Activated T-helper 2 cell treated with anti-CD3 and anti-CD28 coated beads, Interferon-gamma antibody, Interleukin-2, Interleukin-4, amounts not matched to agents 10 μg/mL and 5 μg/mL and 100 μg/mL, durations not matched to agents 14 hours and 24 hours and 36 hours (primary cell): ENCODE measurements at regions of chr17 and their contacts with region 1.

Region 1: DNA sequence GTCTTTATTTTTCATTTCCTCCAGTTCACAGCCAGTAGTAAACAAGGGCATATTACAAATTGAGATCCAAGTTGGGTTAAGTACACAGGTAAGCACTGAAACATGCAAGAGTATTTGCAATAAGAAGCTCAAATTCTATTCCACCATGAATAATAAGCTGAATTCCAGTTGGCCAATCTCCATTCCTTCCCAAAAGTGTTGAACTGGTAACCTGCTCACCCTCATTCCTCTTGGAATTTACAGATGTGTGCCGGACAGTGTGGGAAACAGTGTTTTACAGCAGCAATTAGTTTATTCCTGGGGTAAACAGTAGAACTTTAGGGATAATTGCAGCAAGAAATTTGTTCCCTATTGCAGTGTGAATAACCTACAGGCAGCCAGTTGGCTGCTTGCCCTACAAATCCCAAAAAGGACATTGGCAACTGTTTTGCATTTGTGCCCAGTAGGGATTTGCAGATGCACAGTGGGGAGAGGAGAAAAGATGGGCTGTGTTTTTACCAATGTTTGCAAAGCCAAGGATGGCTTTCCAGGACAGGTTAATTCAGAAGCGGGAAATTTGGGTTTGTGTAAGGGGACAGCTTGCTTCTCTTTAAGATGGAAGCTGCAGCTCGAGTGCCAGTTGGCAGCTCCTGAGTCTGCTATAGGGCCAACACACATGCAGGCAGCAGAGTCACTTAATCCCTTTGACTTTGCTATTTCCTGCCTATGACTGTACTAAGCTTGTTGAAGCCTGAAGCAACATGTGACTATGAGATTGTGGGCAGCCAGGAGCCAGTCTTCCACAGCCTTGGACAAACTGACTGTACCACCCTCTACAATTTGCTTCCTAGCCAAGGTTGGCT is 318.9 kb downstream of the MAP2K6 start:
- DNase-seq: no peak
- H3K4me3 Mint-ChIP-seq: no peak overlapping the region
- H3K27ac Mint-ChIP-seq: no peak overlapping the region
- H3K4me1 Mint-ChIP-seq: peaks cover 23% of the 10 kb centered on the region
- H3K27me3 Mint-ChIP-seq: peaks cover 1% of the 10 kb centered on the region

Region 2: GRCh38 chr17:69761751-69762321 is 28.4 kb after region 1 on chr17:
- intact Hi-C with region 1: loop called (anchors 1 kb)
- DNase-seq: no peak
- H3K4me3 Mint-ChIP-seq: no peak overlapping the region
- H3K27ac Mint-ChIP-seq: no peak overlapping the region
- H3K4me1 Mint-ChIP-seq: peaks cover 29% of the 10 kb centered on the region
- H3K27me3 Mint-ChIP-seq: no peaks in the 10 kb centered on the region

Region 3: DNA sequence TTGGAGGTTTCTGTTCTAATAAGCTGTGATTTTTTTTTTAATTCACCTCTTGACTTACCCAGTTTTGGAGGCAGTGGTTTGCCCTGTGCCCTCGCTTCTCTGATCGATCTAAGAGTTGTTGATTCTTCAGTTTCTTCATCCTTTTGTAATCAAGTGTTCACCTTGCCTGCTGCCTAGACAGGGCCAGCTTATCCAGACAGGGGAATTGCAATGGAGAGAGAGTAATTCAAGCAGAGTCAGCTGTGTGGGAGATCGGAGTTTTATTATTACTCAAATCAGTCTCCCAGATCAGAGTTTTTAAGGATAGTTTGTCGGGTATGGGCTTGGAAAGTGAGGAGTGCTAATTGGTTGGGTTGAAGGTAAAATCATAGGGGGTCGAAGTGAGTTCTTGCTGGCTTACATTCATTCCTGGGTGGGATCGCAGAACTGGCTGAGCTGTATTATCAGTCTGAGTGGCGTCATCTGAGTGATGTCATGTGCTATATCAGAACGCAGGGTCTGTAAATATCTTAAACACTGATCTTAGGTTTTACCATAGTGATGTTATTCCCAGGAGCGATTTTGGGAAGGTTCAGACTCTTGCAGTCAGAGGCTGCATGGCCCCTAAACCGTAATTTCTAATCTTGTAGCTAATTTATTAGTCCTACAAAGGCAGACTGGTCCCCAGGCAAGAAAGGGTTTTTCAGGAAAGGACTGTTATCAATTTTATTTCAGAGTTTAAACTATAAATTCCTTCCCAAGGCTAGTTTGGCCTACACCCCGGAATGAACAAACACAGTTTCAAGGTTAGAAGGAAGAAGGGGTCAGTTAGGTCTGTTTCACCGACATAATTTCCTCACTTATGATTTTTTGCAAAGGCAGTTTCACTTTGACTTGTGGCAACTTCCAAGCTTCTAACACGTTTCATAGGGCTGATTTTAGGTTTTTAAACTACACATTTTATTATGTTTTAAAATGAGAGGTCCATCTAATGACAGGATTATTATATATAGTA is 320.1 kb after region 1 on chr17:
- intact Hi-C with region 1: loop called (anchors 10 kb)
- DNase-seq: no peak
- H3K4me3 Mint-ChIP-seq: no peak overlapping the region
- H3K27ac Mint-ChIP-seq: no peak overlapping the region
- H3K4me1 Mint-ChIP-seq: peaks cover 14% of the 10 kb centered on the region
- H3K27me3 Mint-ChIP-seq: no peaks in the 10 kb centered on the region